Activated naive CD4-positive, alpha-beta T cell treated with anti-CD3 and anti-CD28 coated beads for 36 hours (primary cell): ENCODE measurements at regions of chr6 and their contacts with region 1.

Region 1: GRCh38 chr6:14734416-14735340 is 511.2 kb upstream of the JARID2 start:
- DNase-seq: peak; percentile 74
- H3K4me3 Mint-ChIP-seq: peak overlapping the region; percentile 54
- H3K27ac Mint-ChIP-seq: peak overlapping the region; percentile 96
- H3K4me1 Mint-ChIP-seq: peaks cover 97% of the 10 kb centered on the region
- H3K27me3 Mint-ChIP-seq: no peaks in the 10 kb centered on the region

Region 2: GRCh38 chr6:14276667-14277404 is 457.8 kb before region 1 on chr6:
- CTCF ChIA-PET with region 1: no interaction called
- intact Hi-C with region 1: loop called (anchors 2 kb)
- DNase-seq: peak; percentile 63
- H3K4me3 Mint-ChIP-seq: peak overlapping the region; percentile 40
- H3K27ac Mint-ChIP-seq: peak overlapping the region; percentile 85
- H3K4me1 Mint-ChIP-seq: peaks cover 37% of the 10 kb centered on the region
- H3K27me3 Mint-ChIP-seq: no peaks in the 10 kb centered on the region

Region 3: GRCh38 chr6:14542670-14543366 is 191.9 kb before region 1 on chr6:
- CTCF ChIA-PET with region 1: no interaction called
- intact Hi-C with region 1: loop called (anchors 1 kb)
- DNase-seq: peak; percentile 92
- H3K4me3 Mint-ChIP-seq: no peak overlapping the region
- H3K27ac Mint-ChIP-seq: peak overlapping the region; percentile 64
- H3K4me1 Mint-ChIP-seq: peaks cover 24% of the 10 kb centered on the region
- H3K27me3 Mint-ChIP-seq: no peaks in the 10 kb centered on the region

Region 4: GRCh38 chr6:14711056-14711703 is 23.5 kb before region 1 on chr6:
- CTCF ChIA-PET with region 1: interaction called, 8 read pairs
- intact Hi-C with region 1: loop called (anchors 1 kb)
- DNase-seq: peak; percentile 86
- H3K4me3 Mint-ChIP-seq: peak overlapping the region; percentile 31
- H3K27ac Mint-ChIP-seq: peak overlapping the region; percentile 87
- H3K4me1 Mint-ChIP-seq: peaks cover 36% of the 10 kb centered on the region
- H3K27me3 Mint-ChIP-seq: no peaks in the 10 kb centered on the region

Region 5: GRCh38 chr6:15245361-15246216 is 510.9 kb after region 1 on chr6 and contains the start of gene JARID2:
- CTCF ChIA-PET with region 1: no interaction called
- intact Hi-C with region 1: loop called (anchors 2 kb)
- DNase-seq: peak; percentile 98
- H3K4me3 Mint-ChIP-seq: peak within 1 kb of the TSS; percentile 100
- H3K27ac Mint-ChIP-seq: peak within 1 kb of the TSS; percentile 93
- H3K4me1 Mint-ChIP-seq: peaks cover 23% of the 10 kb centered on the region
- H3K27me3 Mint-ChIP-seq: no peaks in the 10 kb centered on the region
- total RNA-seq, gene JARID2: 26.6 to 27.7 TPM

Region 6: GRCh38 chr6:15776458-15776980 is 1041.8 kb after region 1 on chr6:
- CTCF ChIA-PET with region 1: no interaction called
- intact Hi-C with region 1: loop called (anchors 5 kb)
- DNase-seq: peak; percentile 69
- H3K4me3 Mint-ChIP-seq: no peak overlapping the region
- H3K27ac Mint-ChIP-seq: peak overlapping the region; percentile 76
- H3K4me1 Mint-ChIP-seq: peaks cover 40% of the 10 kb centered on the region
- H3K27me3 Mint-ChIP-seq: peaks cover 4% of the 10 kb centered on the region